Posterior vena cava (tissue), 2 donors: ENCODE measurements at regions of chr1 and their contacts with region 1.

Region 1: GRCh38 chr1:105664495-105664894 is 1392.0 kb upstream of the PRMT6 start:
- DNase-seq: no peak

Region 2: DNA sequence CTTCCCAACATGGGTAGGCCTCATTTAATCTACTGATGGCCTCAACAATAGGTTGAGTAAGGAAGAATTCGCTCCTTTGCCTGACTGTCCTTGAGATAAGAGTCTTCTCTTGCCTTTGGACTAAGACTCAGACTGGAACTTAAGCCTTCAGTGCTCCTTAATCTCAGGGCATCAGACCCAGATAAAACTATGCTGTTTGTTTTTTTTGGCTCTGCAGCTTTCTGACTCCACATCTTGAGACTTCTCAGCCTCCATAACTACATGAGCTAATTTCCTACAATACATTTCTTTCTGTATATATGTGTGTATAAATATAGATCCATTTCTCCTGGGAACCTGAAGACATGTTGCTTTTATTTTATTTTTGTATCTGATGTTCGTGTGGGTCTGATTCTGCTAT is 78.7 kb before region 1 on chr1:
- intact Hi-C with region 1: no loop called
- DNase-seq: no peak

Region 3: GRCh38 chr1:105686874-105687690 is 22.6 kb after region 1 on chr1:
- intact Hi-C with region 1: loop called in 1 of 2 experiments (anchors 2 kb)
- DNase-seq: no peak

Region 4: GRCh38 chr1:105850038-105850437 is 185.5 kb after region 1 on chr1:
- intact Hi-C with region 1: no loop called
- DNase-seq: no peak